PC-9 (cell line): ENCODE measurements at regions of chr5 and their contacts with region 1.

Region 1: GRCh38 chr5:174935854-174936474 is 211.6 kb downstream of the MSX2 start:
- DNase-seq: peak in 1 of 2 experiments; percentile 53
- H3K4me3 ChIP-seq: no peak overlapping the region
- H3K27ac ChIP-seq: no peak overlapping the region
- H3K4me1 ChIP-seq: no peaks in the 10 kb centered on the region
- H3K27me3 ChIP-seq: peaks cover 33% of the 10 kb centered on the region
- CTCF ChIP-seq: peak; percentile 87

Region 2: DNA sequence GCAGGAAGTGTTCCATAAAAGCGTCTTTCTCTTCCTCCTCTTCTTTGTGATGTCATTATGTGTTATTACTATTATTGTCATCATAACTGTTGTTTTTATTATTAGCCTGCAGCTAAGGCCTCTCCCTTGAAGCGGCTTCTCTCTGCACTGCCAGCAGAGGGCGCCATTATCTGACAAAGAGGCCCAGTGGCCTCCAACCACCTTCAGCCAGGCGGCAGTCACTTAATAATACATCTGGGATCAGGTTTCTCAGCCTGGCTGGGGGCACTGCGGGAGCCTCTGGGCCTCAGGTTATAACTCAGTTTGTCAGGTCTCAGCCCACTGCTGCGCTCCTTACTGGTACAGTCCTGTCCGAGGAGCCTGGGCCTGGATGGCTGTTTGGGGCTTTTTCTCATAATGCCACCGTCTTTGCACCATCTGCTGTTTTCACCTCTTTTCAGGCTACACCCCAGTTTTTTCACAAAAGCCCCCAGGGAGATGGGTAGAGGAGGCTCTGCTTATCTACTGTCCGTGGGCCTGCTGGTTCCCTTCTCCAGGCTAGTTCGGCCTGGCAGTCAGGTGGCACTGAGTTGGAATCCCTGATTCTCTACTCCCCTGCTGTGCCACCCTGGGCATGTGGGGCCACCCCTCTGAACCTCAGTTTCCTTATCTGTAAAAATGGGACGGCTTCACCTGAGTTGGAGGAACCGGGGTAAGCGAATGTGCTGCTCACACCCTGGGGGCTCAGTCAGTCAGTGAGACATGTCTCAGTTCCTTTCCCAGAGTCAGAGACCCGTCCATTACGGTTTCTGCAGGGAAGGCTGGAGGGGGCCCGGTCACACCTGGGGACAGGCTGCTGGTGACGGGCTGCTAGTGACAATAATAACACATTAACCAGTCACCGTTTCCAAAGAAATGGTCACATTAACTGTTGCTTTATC is 608.4 kb before region 1 on chr5:
- CTCF ChIA-PET with region 1: no interaction called
- POLR2A ChIA-PET with region 1: no interaction called
- intact Hi-C with region 1: loop called (anchors 1 kb)
- DNase-seq: peak in 1 of 2 experiments; percentile 68
- H3K4me3 ChIP-seq: no peak overlapping the region
- H3K27ac ChIP-seq: no peak overlapping the region
- H3K4me1 ChIP-seq: no peaks in the 10 kb centered on the region
- H3K27me3 ChIP-seq: peaks cover 71% of the 10 kb centered on the region
- CTCF ChIP-seq: peak; percentile 90

Region 3: DNA sequence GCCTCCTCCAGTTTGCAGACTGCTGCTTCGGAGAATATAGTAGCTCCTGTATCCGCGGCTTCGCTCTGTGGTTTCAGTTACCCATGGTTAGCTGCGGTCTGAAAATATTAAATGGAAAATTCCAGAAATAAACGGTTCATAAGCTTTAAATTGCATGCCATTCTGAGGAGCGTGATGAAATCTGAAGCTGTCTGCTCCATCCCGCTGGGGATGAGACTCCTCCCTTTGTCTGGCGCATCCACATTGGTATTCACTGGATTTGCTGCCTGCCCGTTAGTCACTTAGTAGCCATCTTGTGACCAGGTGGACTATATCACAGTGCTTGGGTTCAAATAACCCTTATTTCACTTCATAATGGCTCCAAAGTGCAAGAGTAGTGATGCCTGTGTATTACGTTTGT is 175.2 kb before region 1 on chr5:
- CTCF ChIA-PET with region 1: no interaction called
- POLR2A ChIA-PET with region 1: interaction called, 26 read pairs
- intact Hi-C with region 1: no loop called
- DNase-seq: no peak
- H3K4me3 ChIP-seq: no peak overlapping the region
- H3K27ac ChIP-seq: no peak overlapping the region
- H3K4me1 ChIP-seq: no peaks in the 10 kb centered on the region
- H3K27me3 ChIP-seq: peaks cover 30% of the 10 kb centered on the region; the same call in 1 of the 2 replicates
- CTCF ChIP-seq: no peak

Region 4: DNA sequence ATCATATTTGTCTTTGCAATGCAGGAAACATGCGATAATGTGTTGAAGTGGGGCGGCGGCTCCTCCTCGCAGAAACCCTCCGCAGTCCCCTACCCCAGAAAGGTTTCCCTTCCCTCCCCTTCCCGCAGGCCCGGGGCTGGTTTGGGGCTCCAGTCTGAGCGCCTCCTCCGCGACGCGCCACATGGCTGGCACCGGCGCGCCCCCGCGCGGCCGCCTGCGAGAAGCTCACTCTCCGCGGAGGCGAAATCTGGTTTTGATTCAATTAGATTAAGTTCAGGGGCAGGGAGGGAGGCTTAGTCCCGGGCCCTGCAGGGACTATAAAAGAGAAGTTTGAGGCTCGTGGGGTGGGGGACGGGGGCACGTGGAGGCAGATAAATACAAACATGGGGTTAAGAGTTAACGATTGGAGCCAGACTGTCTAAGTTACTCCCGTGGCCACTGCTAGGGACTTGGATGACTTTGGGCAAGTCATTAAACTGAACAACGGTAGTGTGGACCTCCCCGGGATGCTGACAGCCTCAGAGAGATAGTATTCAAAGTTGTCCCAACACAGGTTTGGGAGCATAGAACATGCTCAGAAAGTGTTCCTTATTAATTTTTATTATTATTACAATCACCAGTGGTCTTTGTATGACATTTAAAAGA is 142.2 kb before region 1 on chr5:
- CTCF ChIA-PET with region 1: no interaction called
- POLR2A ChIA-PET with region 1: no interaction called
- intact Hi-C with region 1: loop called (anchors 1 kb)
- DNase-seq: peak in 1 of 2 experiments; percentile 53
- H3K4me3 ChIP-seq: no peak overlapping the region
- H3K27ac ChIP-seq: no peak overlapping the region
- H3K4me1 ChIP-seq: no peaks in the 10 kb centered on the region
- H3K27me3 ChIP-seq: peaks cover 53% of the 10 kb centered on the region
- CTCF ChIP-seq: peak; percentile 90

Region 5: DNA sequence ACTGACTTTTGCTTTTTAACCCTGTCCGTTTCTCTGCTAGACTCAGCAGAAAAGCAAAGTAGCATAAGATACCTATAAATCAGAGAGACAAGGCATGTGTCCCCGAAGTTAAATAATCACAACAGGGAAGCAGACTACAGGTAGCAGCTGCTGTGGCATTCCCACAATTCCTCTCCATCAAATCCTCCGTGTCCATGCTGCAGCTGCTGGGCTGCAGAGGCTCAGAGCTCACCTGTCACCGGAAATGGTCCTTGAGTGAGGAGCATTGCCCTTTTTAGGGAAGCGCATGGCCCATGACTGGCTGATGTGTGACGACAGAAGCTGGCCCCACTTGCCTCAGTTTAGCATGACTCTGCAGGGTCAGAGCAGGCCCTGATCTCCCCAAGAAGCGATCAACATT is 86.5 kb before region 1 on chr5:
- CTCF ChIA-PET with region 1: no interaction called
- POLR2A ChIA-PET with region 1: no interaction called
- intact Hi-C with region 1: no loop called
- DNase-seq: no peak
- H3K4me3 ChIP-seq: no peak overlapping the region
- H3K27ac ChIP-seq: no peak overlapping the region
- H3K4me1 ChIP-seq: no peaks in the 10 kb centered on the region
- H3K27me3 ChIP-seq: peaks cover 68% of the 10 kb centered on the region
- CTCF ChIP-seq: no peak

Region 6: DNA sequence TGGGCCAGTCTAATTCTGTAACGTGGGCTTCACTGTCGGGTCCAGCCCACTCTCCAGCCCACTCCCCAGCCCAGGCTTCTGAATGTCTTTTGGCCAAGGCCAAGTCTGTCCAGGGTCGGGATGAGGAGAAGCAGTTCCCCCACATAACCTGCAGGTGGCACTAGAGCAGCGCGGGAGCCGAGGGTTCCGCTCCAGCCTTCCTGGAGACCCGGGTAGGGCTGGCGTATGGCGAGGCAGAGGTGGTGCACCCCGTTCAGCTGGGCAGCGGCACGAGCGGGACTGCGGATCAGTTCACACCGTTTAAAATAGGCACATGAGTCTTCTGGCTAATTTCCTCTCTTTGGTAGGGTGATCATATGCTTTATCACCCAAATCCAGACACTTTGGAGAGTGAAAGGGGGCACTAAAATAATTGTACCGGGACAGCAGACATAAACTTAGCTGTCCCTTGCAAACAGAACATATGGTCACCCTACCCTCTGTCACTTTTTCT is 25.7 kb before region 1 on chr5:
- CTCF ChIA-PET with region 1: no interaction called
- POLR2A ChIA-PET with region 1: no interaction called
- intact Hi-C with region 1: loop called (anchors 1 kb)
- DNase-seq: peak in 1 of 2 experiments; percentile 52
- H3K4me3 ChIP-seq: no peak overlapping the region
- H3K27ac ChIP-seq: no peak overlapping the region
- H3K4me1 ChIP-seq: no peaks in the 10 kb centered on the region
- H3K27me3 ChIP-seq: peaks cover 6% of the 10 kb centered on the region; the same call in 1 of the 2 replicates
- CTCF ChIP-seq: peak; percentile 86